WTC11 (cell line): ENCODE measurements at regions of chr9 and their contacts with region 1.

Region 1: DNA sequence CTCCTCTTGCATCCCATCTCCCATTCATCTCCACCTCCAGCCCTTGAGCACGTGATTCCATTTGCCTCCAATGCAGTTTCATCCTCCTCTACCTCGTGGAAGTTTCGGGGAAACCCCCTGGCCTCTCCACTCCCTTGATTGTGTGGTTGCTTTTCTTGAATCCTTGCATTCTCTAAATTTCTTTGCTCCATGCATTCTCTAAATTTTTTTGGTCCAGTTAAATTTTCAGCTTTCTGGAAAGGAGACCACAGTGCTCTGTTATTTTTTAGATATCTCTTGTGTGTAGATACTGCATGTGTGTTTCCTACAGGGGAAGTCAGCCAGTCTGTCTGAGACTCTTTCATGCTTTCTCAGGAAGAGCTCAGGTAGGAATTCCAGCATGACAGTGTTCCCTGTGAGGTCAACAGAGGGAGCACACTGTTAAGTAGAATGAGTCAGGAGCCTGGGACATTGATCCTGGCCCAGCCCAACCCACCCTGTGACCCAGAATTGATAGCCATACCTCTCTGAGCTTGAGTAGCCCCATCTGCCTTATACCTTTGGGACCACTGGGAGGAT is 52.8 kb downstream of the AMBP start:
- DNase-seq: no peak
- ATAC-seq: peak; percentile 62; the same call in 1 of the 2 replicates
- H3K4me3 Mint-ChIP-seq: no peak overlapping the region
- H3K27ac Mint-ChIP-seq: peak overlapping the region; percentile 57
- H3K4me1 Mint-ChIP-seq: peaks cover 7% of the 10 kb centered on the region
- H3K27me3 Mint-ChIP-seq: no peaks in the 10 kb centered on the region
- CTCF ChIP-seq: no peak

Region 2: DNA sequence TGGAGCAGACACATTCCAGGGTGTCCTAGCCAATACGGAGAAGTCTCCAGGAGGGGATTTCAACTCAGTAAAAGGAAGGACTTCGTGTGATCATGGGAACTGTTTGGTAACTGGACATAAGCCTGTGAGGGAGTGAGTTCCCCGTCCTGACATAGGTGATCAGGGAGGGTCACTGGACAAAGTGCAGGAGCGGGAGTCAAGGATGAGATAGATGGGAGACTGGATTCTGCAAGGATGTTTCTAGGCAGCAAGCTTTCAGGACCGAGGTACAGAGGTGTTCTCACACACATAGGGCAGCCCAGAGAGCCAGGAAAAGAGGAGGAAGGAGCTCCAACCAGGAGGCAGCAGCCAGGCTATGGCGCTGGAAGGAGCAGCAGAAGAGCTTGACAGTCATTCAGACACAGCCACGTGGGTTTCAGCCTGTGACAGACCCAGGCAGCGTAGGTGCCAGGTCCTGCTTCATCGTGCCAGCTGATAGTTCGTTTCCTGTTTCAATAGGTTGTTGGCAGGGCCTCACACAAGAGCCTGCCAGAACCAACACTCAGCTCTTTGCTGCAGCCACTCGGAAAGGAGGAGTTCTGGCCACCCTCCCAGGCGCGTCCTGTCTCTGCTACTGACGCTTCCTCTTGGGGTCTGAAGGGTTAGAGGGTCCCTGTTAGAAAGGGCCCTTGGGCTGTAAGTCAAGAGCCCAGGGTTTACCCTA is 31.3 kb before region 1 on chr9:
- CTCF ChIA-PET with region 1: no interaction called
- POLR2A ChIA-PET with region 1: no interaction called
- DNase-seq: no peak
- ATAC-seq: no peak
- H3K4me3 Mint-ChIP-seq: no peak overlapping the region
- H3K27ac Mint-ChIP-seq: no peak overlapping the region
- H3K4me1 Mint-ChIP-seq: no peaks in the 10 kb centered on the region
- H3K27me3 Mint-ChIP-seq: no peaks in the 10 kb centered on the region
- CTCF ChIP-seq: no peak

Region 3: GRCh38 chr9:114047717-114048116 is 22.4 kb after region 1 on chr9:
- CTCF ChIA-PET with region 1: interaction called, 12 read pairs
- POLR2A ChIA-PET with region 1: no interaction called
- DNase-seq: peak; percentile 33
- ATAC-seq: peak; percentile 95
- H3K4me3 Mint-ChIP-seq: no peak overlapping the region
- H3K27ac Mint-ChIP-seq: no peak overlapping the region
- H3K4me1 Mint-ChIP-seq: no peaks in the 10 kb centered on the region
- H3K27me3 Mint-ChIP-seq: no peaks in the 10 kb centered on the region
- CTCF ChIP-seq: no peak